Activated CD8-positive, alpha-beta T cell treated with anti-CD3 and anti-CD28 coated beads, Interleukin-2, amount 10 ng/mL, durations not matched to agents 7 days and 5 days (primary cell): ENCODE measurements at regions of chr6 and their contacts with region 1.

Region 1: GRCh38 chr6:24991810-24992467 is 56.2 kb upstream of the RIPOR2 start:
- DNase-seq: peak; percentile 86
- ATAC-seq: peak; percentile 95
- H3K4me3 Mint-ChIP-seq: no peak overlapping the region
- H3K27ac Mint-ChIP-seq: peak overlapping the region; percentile 75
- H3K4me1 Mint-ChIP-seq: peaks cover 46% of the 10 kb centered on the region
- H3K27me3 Mint-ChIP-seq: no peaks in the 10 kb centered on the region

Region 2: DNA sequence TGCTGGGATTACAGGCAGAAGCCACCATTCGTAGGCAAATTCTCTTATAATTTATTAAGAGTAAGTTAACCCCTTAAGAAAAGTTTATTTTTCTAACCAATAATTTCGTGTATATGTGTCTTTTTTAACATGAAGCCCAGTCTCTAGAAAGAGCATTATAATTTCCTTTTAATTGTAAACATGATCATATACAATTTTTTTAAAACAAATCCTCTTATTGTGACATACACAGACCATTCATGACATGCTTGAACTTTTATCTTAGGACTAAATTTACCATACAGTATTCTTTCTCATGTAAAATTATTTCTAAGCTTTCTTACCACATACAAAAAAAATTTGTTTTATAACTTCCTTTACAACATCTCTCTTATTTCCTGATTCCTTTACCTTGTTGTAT is 318.3 kb before region 1 on chr6:
- CTCF ChIA-PET with region 1: no interaction called
- POLR2A ChIA-PET with region 1: no interaction called
- DNase-seq: no peak
- ATAC-seq: no peak
- H3K4me3 Mint-ChIP-seq: no peak overlapping the region
- H3K27ac Mint-ChIP-seq: no peak overlapping the region
- H3K4me1 Mint-ChIP-seq: peaks cover 6% of the 10 kb centered on the region
- H3K27me3 Mint-ChIP-seq: no peaks in the 10 kb centered on the region

Region 3: DNA sequence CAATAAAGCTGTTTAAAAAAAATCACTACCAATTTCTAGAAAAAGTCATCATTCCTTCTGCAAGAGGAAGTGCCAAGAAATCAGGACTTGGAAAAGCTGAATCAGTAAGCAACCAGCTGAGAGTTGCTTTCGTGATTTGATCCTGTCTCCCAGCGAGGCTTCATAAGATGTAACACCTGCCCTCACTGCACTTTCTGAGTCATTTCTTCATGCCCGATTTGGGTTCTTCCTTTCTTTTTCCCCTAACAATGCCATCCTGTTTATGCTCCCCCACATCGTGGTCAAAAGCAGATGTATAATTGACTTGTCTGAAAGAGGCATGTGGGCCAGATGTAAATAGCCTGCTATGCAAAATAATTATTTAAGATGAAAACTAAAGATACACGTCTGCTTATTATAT is 108.3 kb before region 1 on chr6:
- CTCF ChIA-PET with region 1: interaction called, 20 read pairs
- POLR2A ChIA-PET with region 1: interaction called, 3 read pairs
- DNase-seq: no peak
- ATAC-seq: peak; percentile 74
- H3K4me3 Mint-ChIP-seq: peak overlapping the region; percentile 10
- H3K27ac Mint-ChIP-seq: peak overlapping the region; percentile 36
- H3K4me1 Mint-ChIP-seq: peaks cover 64% of the 10 kb centered on the region
- H3K27me3 Mint-ChIP-seq: no peaks in the 10 kb centered on the region

Region 4: DNA sequence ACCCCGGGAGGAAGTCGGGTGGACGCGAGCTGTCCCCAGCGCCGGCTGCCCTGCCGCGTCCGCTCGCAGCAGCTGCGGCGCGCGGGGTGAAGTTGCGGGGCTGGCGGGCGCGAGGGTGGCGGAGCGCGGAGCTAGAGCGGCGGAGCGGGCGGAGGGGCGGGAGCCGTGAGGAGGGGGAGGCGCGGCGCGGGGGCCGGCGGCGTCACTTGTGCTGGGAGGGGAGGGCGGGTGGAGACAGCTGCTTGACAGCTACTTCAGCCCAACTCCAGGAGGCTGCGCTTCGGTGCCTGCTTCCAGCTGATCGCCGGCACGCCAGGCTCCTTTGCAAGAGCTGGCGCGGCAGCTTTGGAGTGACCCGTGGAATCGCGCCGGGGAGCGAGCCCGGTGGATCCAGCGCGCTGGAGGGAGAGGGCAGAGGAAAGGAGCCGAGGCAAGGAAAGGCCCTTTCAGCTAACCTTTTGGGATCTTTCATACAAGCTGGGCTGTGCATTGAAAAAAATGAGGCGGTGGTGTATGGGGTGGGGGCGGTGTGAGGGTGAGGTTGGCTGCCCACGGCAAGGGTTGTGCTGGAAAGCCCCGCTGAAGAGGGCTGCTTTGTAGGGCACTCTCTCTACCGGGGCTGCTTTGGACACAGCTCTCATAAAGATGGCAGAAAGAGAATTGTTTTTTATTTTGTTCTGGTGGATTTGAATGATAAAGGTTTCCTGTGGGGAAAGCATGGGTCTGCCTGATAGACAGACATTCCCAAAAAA is 80.8 kb before region 1 on chr6:
- CTCF ChIA-PET with region 1: interaction called, 88 read pairs
- POLR2A ChIA-PET with region 1: interaction called, 8 read pairs
- DNase-seq: no peak
- ATAC-seq: peak; percentile 42
- H3K4me3 Mint-ChIP-seq: peak overlapping the region; percentile 81
- H3K27ac Mint-ChIP-seq: peak overlapping the region; percentile 87
- H3K4me1 Mint-ChIP-seq: peaks cover 94% of the 10 kb centered on the region
- H3K27me3 Mint-ChIP-seq: no peaks in the 10 kb centered on the region

Region 5: DNA sequence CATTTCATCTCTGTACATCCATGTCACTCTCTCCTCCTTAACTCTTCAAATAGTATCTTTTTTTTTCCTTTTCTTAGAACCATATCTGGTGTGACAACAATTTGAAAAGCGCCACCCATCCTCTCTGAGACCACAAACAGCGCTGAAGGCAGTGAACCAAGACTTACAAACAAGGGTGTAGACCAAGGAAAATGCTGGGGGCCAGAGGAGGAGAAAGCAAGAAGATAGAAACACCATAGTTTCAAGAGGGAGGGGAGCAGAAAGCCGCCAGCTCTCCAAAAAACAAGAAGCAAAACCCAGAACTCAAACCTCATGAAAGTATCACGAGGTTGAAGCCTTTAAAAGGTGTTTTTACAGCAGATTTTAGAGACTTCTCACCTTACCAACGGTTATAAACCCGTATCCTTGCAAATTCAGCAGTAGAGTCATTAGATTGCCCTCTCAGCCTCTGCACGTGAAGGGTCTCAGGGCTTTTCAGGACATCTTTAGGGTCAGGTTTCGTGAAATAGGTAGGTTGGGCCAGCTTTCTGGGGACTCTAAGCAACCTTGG is 42.8 kb before region 1 on chr6:
- CTCF ChIA-PET with region 1: interaction called, 72 read pairs
- POLR2A ChIA-PET with region 1: interaction called, 8 read pairs
- DNase-seq: peak; percentile 87
- ATAC-seq: peak; percentile 69
- H3K4me3 Mint-ChIP-seq: peak overlapping the region; percentile 46
- H3K27ac Mint-ChIP-seq: peak overlapping the region; percentile 94
- H3K4me1 Mint-ChIP-seq: peaks cover 74% of the 10 kb centered on the region
- H3K27me3 Mint-ChIP-seq: no peaks in the 10 kb centered on the region

Region 6: GRCh38 chr6:24974182-24975171 is 17.5 kb before region 1 on chr6:
- CTCF ChIA-PET with region 1: interaction called, 55 read pairs
- POLR2A ChIA-PET with region 1: no interaction called
- DNase-seq: no peak
- ATAC-seq: peak; percentile 91
- H3K4me3 Mint-ChIP-seq: peak overlapping the region; percentile 24
- H3K27ac Mint-ChIP-seq: peak overlapping the region; percentile 73
- H3K4me1 Mint-ChIP-seq: peaks cover 20% of the 10 kb centered on the region
- H3K27me3 Mint-ChIP-seq: no peaks in the 10 kb centered on the region

Region 7: GRCh38 chr6:25017932-25018567 is 26.1 kb after region 1 on chr6:
- CTCF ChIA-PET with region 1: interaction called, 113 read pairs
- POLR2A ChIA-PET with region 1: interaction called, 4 read pairs
- DNase-seq: peak; percentile 89
- ATAC-seq: peak; percentile 86
- H3K4me3 Mint-ChIP-seq: no peak overlapping the region
- H3K27ac Mint-ChIP-seq: peak overlapping the region; percentile 62
- H3K4me1 Mint-ChIP-seq: peaks cover 40% of the 10 kb centered on the region
- H3K27me3 Mint-ChIP-seq: no peaks in the 10 kb centered on the region

Region 8: GRCh38 chr6:25070547-25071366 is 78.8 kb after region 1 on chr6:
- CTCF ChIA-PET with region 1: interaction called, 26 read pairs
- POLR2A ChIA-PET with region 1: no interaction called
- DNase-seq: peak; percentile 90
- ATAC-seq: peak; percentile 95
- H3K4me3 Mint-ChIP-seq: peak overlapping the region; percentile 53
- H3K27ac Mint-ChIP-seq: peak overlapping the region; percentile 91
- H3K4me1 Mint-ChIP-seq: peaks cover 7% of the 10 kb centered on the region
- H3K27me3 Mint-ChIP-seq: peaks cover 3% of the 10 kb centered on the region